SK-N-SH (cell line): ENCODE measurements at regions of chr13 and their contacts with region 1.

Region 1: DNA sequence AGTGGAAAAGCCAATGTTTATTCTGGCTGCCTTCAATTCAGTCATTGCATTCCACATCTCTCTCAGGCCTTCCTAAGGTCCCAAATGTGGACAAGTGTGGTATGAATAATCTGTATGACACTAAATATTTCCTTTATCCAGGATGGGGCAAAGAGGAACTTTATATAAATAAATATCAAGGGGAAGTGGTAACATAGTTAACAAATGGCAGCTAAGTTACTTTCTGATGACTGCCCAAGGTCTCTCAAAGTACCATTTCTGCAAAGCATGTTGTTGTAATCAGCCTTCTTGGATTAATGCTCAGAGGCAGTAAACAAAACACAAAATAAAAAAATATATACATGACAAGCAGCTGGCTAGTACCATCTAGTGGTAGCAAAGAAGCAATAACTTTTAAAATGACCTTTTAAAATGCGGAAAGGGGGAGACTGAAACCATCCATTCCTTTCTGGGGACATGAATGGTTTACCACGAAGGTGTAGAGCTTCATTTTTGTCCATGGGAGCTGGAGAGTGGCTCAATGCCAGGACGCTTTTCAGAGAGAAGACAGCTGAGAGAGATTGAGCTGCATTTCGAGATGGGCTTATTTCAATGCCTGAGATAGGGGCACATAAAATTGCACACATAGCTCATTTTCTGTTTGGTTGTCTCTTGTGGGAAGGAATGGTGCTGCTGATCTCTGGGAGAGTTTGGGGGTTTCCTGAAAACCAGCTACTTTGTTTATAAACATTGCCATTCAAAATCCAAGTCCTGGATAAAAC is 259.2 kb downstream of the RFC3 start:
- DNase-seq: peak; percentile 35
- H3K4me3 ChIP-seq: no peak overlapping the region
- H3K27ac ChIP-seq: peak overlapping the region; percentile 67 to 93
- H3K4me1 ChIP-seq: peaks cover 2 to 13% of the 10 kb centered on the region in 2 experiments; a peak in 3 of 4 replicates
- H3K27me3 ChIP-seq: no peaks in the 10 kb centered on the region
- CTCF ChIP-seq: peak; percentile 79
- EP300 ChIP-seq: no peak
- RAD21 ChIP-seq: peak; percentile 87

Region 2: GRCh38 chr13:33799950-33800592 is 277.1 kb before region 1 on chr13:
- CTCF ChIA-PET with region 1: interaction called, 29 read pairs
- POLR2A ChIA-PET with region 1: no interaction called
- DNase-seq: peak; percentile 19
- H3K4me3 ChIP-seq: no peak overlapping the region
- H3K27ac ChIP-seq: no peak overlapping the region
- H3K4me1 ChIP-seq: no peaks in the 10 kb centered on the region; a peak in 1 of 4 replicates
- H3K27me3 ChIP-seq: no peaks in the 10 kb centered on the region
- CTCF ChIP-seq: peak; percentile 57
- EP300 ChIP-seq: no peak
- RAD21 ChIP-seq: peak; percentile 72

Region 3: GRCh38 chr13:33875618-33876401 is 201.3 kb before region 1 on chr13:
- CTCF ChIA-PET with region 1: interaction called, 12 read pairs
- POLR2A ChIA-PET with region 1: no interaction called
- DNase-seq: no peak
- H3K4me3 ChIP-seq: no peak overlapping the region
- H3K27ac ChIP-seq: peak overlapping the region in 1 of 2 experiments; percentile 82; a peak in 2 of 4 replicates
- H3K4me1 ChIP-seq: peaks cover 3 to 15% of the 10 kb centered on the region in 2 experiments; a peak in 2 of 4 replicates
- H3K27me3 ChIP-seq: no peaks in the 10 kb centered on the region
- CTCF ChIP-seq: no peak
- EP300 ChIP-seq: no peak
- RAD21 ChIP-seq: no peak

Region 4: GRCh38 chr13:33931397-33932311 is 145.5 kb before region 1 on chr13:
- CTCF ChIA-PET with region 1: interaction called, 14 read pairs
- POLR2A ChIA-PET with region 1: no interaction called
- DNase-seq: peak; percentile 7
- H3K4me3 ChIP-seq: no peak overlapping the region
- H3K27ac ChIP-seq: peak overlapping the region in 1 of 2 experiments; percentile 87; a peak in 1 of 4 replicates
- H3K4me1 ChIP-seq: peaks cover 8 to 28% of the 10 kb centered on the region in 2 experiments
- H3K27me3 ChIP-seq: no peaks in the 10 kb centered on the region
- CTCF ChIP-seq: peak; percentile 68
- EP300 ChIP-seq: no peak
- RAD21 ChIP-seq: peak; percentile 77

Region 5: GRCh38 chr13:34064456-34065205 is 12.5 kb before region 1 on chr13:
- CTCF ChIA-PET with region 1: interaction called, 23 read pairs
- POLR2A ChIA-PET with region 1: no interaction called
- DNase-seq: no peak
- H3K4me3 ChIP-seq: no peak overlapping the region
- H3K27ac ChIP-seq: no peak overlapping the region
- H3K4me1 ChIP-seq: no peaks in the 10 kb centered on the region
- H3K27me3 ChIP-seq: no peaks in the 10 kb centered on the region
- CTCF ChIP-seq: no peak
- EP300 ChIP-seq: no peak
- RAD21 ChIP-seq: no peak

Region 6: GRCh38 chr13:34657716-34658115 is 580.6 kb after region 1 on chr13:
- CTCF ChIA-PET with region 1: no interaction called
- POLR2A ChIA-PET with region 1: no interaction called
- DNase-seq: no peak
- H3K4me3 ChIP-seq: no peak overlapping the region
- H3K27ac ChIP-seq: no peak overlapping the region
- H3K4me1 ChIP-seq: peaks cover 0 to 5% of the 10 kb centered on the region in 2 experiments; a peak in 1 of 4 replicates
- H3K27me3 ChIP-seq: no peaks in the 10 kb centered on the region
- CTCF ChIP-seq: no peak
- EP300 ChIP-seq: no peak
- RAD21 ChIP-seq: no peak

Region 7: DNA sequence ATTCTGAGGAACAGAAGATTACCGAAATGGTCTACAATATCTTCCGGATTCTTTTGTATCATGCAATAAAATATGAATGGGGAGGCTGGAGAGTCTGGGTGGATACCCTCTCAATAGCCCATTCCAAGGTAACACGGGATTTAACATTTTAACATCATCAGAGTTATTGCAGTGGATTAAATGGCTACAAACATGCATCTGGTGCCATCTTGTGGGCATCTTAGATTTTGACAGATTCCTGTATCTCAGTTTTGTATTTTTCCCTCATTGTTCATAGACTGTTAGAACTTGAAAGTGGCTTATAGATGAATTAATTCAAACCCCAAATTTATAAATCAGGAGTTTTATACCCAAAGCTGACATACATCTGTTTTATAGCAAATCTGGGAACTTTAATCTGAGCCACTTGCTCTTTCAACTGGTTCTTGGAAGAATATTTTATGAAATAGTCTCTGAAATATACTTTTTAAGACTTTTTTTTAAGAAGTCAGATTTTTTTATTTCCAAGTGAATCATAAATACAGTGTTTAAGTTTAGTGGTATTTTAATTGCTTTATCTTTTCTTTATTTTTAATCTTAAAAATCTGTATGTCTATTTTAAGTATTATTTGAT is 1080.1 kb after region 1 on chr13:
- CTCF ChIA-PET with region 1: interaction called, 10 read pairs
- POLR2A ChIA-PET with region 1: no interaction called
- DNase-seq: peak; percentile 43
- H3K4me3 ChIP-seq: no peak overlapping the region; a peak in 1 of 4 replicates
- H3K27ac ChIP-seq: no peak overlapping the region
- H3K4me1 ChIP-seq: peaks cover 0 to under 1% of the 10 kb centered on the region in 2 experiments; a peak in 2 of 4 replicates
- H3K27me3 ChIP-seq: no peaks in the 10 kb centered on the region
- CTCF ChIP-seq: peak; percentile 80
- EP300 ChIP-seq: no peak
- RAD21 ChIP-seq: peak; percentile 97

Region 8: GRCh38 chr13:35164324-35164932 is 1087.3 kb after region 1 on chr13:
- CTCF ChIA-PET with region 1: interaction called, 10 read pairs
- POLR2A ChIA-PET with region 1: no interaction called
- DNase-seq: peak; percentile 16
- H3K4me3 ChIP-seq: no peak overlapping the region; a peak in 1 of 4 replicates
- H3K27ac ChIP-seq: no peak overlapping the region
- H3K4me1 ChIP-seq: peaks cover 0 to 6% of the 10 kb centered on the region in 2 experiments; a peak in 3 of 4 replicates
- H3K27me3 ChIP-seq: no peaks in the 10 kb centered on the region
- CTCF ChIP-seq: peak; percentile 77
- EP300 ChIP-seq: no peak
- RAD21 ChIP-seq: peak; percentile 90